ENCODE measurements at regions of chr2 and their contacts with region 1.

Region 1: GRCh38 chr2:198309673-198310280 is 505.4 kb downstream of the PLCL1 start:
- DNase-seq: peak; percentile 65
- H3K4me3 Mint-ChIP-seq: no peak overlapping the region
- H3K27ac Mint-ChIP-seq: no peak overlapping the region
- H3K4me1 Mint-ChIP-seq: peaks cover 6% of the 10 kb centered on the region
- H3K27me3 Mint-ChIP-seq: peaks cover 60% of the 10 kb centered on the region
- CTCF ChIP-seq: peak; percentile 71

Region 2: GRCh38 chr2:198214114-198214596 is 95.6 kb before region 1 on chr2:
- CTCF ChIA-PET with region 1: no interaction called
- POLR2A ChIA-PET with region 1: no interaction called
- intact Hi-C with region 1: no loop called
- DNase-seq: peak; percentile 17
- H3K4me3 Mint-ChIP-seq: no peak overlapping the region
- H3K27ac Mint-ChIP-seq: no peak overlapping the region
- H3K4me1 Mint-ChIP-seq: peaks cover 5% of the 10 kb centered on the region
- H3K27me3 Mint-ChIP-seq: no peaks in the 10 kb centered on the region
- CTCF ChIP-seq: no peak

Region 3: DNA sequence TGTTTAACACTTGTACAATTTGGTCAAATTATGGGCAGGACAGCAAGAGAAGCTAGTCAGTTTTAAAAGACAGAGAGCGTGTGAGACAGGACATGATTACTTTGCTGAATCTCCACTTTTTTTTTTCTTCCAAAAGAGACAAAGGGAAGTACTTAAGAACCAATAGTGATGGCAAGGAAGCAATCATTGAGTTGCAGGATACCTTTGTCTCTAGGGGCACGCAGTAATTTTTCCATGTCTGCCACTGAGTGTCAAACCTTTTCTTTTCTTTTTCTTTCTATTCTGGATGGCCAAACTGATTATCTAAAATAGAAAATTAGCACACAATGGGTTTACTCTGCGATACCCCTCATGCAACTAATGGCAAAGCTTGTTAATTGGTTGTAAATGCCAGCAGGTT is 27.6 kb after region 1 on chr2:
- CTCF ChIA-PET with region 1: interaction called, 10 read pairs
- POLR2A ChIA-PET with region 1: no interaction called
- intact Hi-C with region 1: no loop called
- DNase-seq: no peak
- H3K4me3 Mint-ChIP-seq: no peak overlapping the region
- H3K27ac Mint-ChIP-seq: no peak overlapping the region
- H3K4me1 Mint-ChIP-seq: no peaks in the 10 kb centered on the region
- H3K27me3 Mint-ChIP-seq: peaks cover 80% of the 10 kb centered on the region
- CTCF ChIP-seq: no peak

Region 4: DNA sequence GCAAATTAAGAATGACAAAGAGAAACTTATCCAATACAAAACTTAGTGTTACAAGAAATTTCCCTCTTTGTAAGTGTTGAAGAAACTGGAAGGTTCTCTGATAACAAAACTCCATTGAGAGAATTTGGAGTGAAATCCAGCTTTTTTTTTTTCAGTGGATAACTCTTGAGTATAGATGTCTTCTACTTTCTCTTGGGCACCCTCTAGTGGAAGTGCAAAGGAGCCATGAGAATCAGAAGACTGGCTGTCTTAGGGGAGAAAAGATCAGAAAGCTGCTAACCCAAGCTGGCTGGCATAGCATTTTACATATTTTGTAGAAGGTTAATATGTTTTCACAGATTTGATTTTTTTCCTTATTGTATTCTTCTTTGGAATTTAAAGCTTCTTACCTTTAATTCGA is 1286.8 kb after region 1 on chr2:
- CTCF ChIA-PET with region 1: interaction called, 5 read pairs
- POLR2A ChIA-PET with region 1: no interaction called
- intact Hi-C with region 1: loop called (anchors 5 kb)
- DNase-seq: peak; percentile 60
- H3K4me3 Mint-ChIP-seq: no peak overlapping the region
- H3K27ac Mint-ChIP-seq: no peak overlapping the region
- H3K4me1 Mint-ChIP-seq: no peaks in the 10 kb centered on the region
- H3K27me3 Mint-ChIP-seq: peaks cover 45% of the 10 kb centered on the region
- CTCF ChIP-seq: peak; percentile 32

Region 5: DNA sequence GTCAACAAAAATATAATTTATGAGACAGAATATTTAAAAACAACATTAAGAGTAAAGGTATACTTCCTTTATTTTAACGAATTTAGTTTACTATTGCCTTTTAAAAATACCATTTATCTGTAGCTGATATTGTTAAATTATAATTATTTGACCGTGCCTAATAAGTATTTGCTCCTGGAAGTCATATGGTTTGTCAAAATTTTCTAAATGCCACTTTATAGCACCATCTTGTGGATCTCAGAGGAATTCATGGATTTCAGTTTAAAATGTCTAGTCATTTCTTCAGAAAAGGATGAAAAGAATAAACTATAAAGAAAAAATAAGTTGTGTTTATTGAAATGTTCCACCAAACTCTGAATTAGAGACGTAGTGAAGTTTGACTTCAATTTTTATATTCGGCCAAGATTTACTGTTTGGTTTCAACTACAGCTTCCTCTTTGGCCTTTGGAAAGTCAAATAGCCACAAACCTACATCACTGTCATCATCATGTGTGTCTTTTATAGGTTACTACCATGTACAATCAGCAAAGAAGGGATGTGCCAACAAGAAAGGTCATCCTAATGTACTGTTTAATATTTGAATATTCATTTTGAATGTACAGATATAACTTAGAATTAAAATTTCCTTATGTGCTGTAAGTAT is 1551.5 kb after region 1 on chr2:
- CTCF ChIA-PET with region 1: interaction called, 12 read pairs
- POLR2A ChIA-PET with region 1: no interaction called
- intact Hi-C with region 1: no loop called
- DNase-seq: peak; percentile 20
- H3K4me3 Mint-ChIP-seq: no peak overlapping the region
- H3K27ac Mint-ChIP-seq: no peak overlapping the region
- H3K4me1 Mint-ChIP-seq: no peaks in the 10 kb centered on the region
- H3K27me3 Mint-ChIP-seq: peaks cover 87% of the 10 kb centered on the region
- CTCF ChIP-seq: peak; percentile 50

Measured in MCF 10A (cell line).